GM10248 (cell line): ENCODE measurements at regions of chr5 and their contacts with region 1.

Region 1: GRCh38 chr5:157670662-157671591 is at the start of gene C5orf52:
- DNase-seq: peak; percentile 57
- CTCF ChIP-seq: no peak

Region 2: DNA sequence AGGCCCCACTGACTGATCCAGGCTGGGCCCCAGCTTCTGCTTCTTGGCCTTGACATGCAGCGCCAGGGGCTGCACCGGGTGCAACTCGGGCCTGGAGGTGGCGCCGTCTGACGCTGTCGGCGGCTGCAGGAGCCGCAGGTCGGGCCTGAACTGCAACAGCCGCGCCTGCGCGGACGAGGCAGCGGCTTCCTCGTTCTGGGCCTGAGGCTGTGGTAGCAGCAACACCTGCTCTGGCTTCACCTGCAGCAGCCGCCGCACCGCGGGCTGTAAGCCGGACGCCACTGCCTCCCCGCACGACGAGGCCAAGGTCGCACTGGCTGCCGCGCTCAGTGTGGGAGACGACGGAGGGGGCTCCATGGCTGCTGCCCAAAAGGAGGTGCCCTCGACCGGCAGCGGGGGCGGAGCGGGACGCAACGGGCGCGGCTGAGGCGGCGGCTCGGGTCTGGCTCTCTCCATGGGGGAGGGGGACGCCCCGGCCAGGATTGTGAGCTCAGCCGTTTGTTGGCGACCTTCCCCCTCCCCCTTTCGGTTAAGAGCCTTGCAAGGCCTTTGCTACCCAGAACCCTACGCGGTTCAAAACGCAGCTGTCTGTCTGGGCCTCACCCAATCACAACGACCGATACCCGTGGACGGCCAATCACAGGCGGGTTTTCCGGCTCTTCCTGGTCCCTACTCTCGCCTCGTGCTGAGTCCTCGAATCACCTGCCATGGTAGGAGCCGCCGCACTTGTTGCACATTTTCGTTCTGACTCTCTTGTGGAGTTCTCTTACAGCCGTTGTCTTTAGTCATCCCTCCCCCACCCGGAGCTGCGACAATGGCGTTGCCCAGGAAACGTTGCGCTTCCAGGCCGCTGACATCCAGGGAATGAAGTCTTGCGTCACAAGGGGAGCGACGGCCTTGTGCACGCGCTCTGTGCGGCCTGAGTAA is 19.0 kb before region 1 on chr5 and contains the start of gene SOX30:
- CTCF ChIA-PET with region 1: interaction called, 16 read pairs
- POLR2A ChIA-PET with region 1: no interaction called
- DNase-seq: peak; percentile 75
- CTCF ChIP-seq: peak; percentile 32

Region 3: DNA sequence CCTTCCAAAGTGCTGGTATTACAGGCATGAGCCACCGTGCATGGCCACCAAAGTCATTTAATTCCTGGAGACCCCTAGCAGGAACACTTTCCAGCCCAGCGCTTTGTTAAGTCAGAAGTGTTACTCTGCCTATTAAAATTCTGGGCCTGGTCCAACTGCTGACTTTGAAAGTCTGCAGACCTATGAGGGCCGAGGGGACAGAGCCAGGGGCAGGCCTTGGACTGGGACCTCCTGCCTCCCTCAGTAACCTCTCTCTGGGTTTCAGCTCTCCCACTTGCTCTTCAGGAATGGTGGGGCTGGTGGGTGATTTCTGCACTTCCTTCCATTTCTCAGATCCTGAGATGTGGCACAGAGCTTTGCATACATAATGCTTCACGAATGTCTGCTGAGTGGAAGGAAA is 10.1 kb after region 1 on chr5:
- CTCF ChIA-PET with region 1: interaction called, 22 read pairs
- POLR2A ChIA-PET with region 1: no interaction called
- DNase-seq: no peak
- CTCF ChIP-seq: no peak

Region 4: DNA sequence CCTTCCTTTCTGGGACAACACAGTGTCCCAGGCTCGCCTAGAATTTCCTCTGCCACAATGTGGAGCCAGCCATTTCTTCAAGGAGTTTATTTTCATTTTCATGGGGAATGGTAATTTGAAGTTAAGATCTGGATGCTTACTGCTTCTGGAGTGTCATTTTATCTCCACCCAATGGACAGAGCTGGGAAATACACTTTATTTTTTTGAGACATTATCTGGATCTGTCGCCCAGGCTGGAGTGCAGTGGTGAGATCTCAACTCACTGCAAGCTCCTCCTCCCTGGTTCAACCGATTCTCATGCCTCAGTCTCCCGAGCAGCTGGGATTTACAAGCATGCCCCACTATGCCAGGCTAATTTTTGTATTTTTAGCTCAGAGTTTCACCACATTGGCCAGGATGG is 47.6 kb after region 1 on chr5:
- CTCF ChIA-PET with region 1: interaction called, 15 read pairs
- POLR2A ChIA-PET with region 1: no interaction called
- DNase-seq: peak; percentile 52
- CTCF ChIP-seq: peak; percentile 59

Region 5: DNA sequence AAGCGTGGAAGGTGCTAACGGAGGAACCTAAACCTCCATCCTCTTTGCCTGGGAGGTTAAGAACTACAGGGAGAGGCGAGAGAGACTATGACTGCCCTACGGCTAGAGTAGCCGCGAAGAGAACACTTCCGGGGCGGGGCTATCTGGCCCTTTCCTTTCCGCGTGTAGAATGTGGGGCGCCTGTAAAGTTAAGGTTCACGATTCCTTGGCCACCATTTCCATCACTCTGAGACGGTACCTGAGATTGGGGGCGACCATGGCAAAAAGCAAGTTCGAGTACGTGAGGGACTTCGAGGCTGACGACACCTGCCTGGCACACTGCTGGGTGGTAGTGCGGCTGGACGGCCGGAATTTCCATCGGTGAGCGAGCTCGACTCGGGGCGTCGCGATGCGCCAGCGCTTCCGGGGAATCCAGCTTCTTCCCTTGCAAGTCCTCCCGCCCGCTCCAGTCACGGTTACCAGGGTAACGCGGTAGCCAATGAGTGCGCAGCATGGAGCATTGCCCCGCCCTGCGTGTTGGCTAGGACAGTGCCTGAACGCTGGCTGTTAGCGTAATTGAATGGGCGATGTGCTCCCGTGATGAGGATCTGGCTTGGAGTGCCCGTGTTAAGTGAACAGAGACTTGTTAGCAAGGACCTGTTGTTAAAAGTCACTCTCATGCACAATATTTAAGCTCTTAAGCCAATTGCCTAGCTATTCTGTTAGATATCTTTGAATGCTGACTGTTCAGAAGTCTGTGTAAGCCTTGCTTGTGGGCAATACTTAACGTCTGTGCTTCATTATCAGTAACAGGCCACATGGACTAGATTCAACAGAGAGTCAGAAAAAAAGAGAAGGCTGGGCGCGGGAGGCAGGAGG is 60.6 kb after region 1 on chr5 and contains the start of gene THG1L:
- CTCF ChIA-PET with region 1: interaction called, 10 read pairs
- POLR2A ChIA-PET with region 1: no interaction called
- DNase-seq: peak; percentile 94
- CTCF ChIP-seq: no peak

Region 6: GRCh38 chr5:157820593-157821252 is 149.8 kb after region 1 on chr5:
- CTCF ChIA-PET with region 1: no interaction called
- POLR2A ChIA-PET with region 1: no interaction called
- DNase-seq: peak; percentile 26
- CTCF ChIP-seq: peak; percentile 57